ENCODE measurements at regions of chr9 and their contacts with region 1.

Region 1: DNA sequence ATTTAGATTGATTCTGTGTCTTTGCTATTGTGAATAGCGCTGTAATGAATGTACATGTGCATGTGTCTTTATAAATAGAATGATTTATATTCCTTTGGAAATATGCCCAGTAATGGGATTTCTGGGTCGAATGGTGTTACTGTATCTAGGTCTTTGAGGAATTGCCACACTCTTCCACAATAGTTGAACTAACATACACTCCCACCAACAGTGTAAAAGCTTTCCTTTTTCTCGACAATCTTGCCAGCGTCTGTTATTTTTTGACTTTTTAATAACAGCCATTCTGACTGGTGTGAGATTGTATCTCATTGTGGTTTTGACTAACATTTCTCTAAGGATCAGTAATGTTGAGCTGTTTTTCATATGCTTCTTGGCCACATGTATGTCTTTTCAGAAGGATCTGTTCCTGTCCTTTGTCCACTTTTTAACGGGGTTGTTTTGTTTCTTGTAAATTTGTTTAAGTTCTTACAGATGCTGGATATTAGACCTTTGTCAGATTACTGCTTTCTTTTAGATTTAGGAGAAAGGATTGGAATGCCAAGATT is 125.0 kb upstream of the NR5A1 start:
- DNase-seq: peak; percentile 38
- ATAC-seq: no peak
- H3K4me3 ChIP-seq: no peak overlapping the region
- H3K27ac ChIP-seq: no peak overlapping the region
- H3K4me1 ChIP-seq: peaks cover 2% of the 10 kb centered on the region; the same call in 1 of the 2 replicates
- H3K27me3 ChIP-seq: no peaks in the 10 kb centered on the region; the same call in 1 of the 2 replicates
- CTCF ChIP-seq: no peak
- POLR2A ChIP-seq: no peak
- RAD21 ChIP-seq: no peak

Region 2: GRCh38 chr9:124645274-124645673 is 13.1 kb after region 1 on chr9:
- CTCF ChIA-PET with region 1: interaction called, 4 read pairs
- POLR2A ChIA-PET with region 1: no interaction called
- dilution Hi-C with region 1: no loop called
- in situ Hi-C with region 1: no loop called
- intact Hi-C with region 1: loop called (anchors 1 kb)
- DNase-seq: no peak
- ATAC-seq: no peak
- H3K4me3 ChIP-seq: no peak overlapping the region
- H3K27ac ChIP-seq: no peak overlapping the region
- H3K4me1 ChIP-seq: no peaks in the 10 kb centered on the region
- H3K27me3 ChIP-seq: peaks cover 4% of the 10 kb centered on the region
- CTCF ChIP-seq: no peak
- POLR2A ChIP-seq: no peak
- RAD21 ChIP-seq: no peak

Region 3: DNA sequence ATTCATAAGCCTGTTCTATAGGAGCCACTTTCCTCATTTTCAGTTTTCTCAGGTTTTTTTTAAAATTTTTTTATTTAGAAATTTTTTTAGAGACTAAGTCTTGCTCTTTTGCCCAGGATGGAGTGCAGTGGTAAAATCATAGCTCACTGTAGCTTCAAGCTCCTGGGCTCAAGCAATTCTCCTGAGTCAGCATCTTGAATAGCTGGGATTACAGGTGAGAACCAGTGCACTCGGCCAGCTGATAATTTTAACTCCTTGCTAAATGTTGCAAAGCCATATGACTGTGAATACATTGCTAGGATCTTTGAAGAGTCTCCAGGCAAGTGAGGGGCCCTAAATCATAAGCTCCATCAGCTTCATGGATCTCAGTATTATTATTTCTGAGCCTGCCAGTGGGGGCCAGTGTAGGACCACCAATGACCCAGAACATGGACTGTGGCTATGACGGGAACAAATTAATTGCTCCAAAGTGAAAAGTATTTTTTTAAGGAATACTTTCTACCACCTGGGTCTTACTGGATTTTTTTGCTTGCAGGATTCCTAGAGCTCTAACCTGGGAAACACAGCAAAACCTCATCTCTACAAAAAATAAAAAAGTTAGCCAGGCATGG is 623.7 kb after region 1 on chr9:
- CTCF ChIA-PET with region 1: no interaction called
- POLR2A ChIA-PET with region 1: no interaction called
- dilution Hi-C with region 1: no loop called
- in situ Hi-C with region 1: no loop called
- intact Hi-C with region 1: no loop called
- DNase-seq: no peak
- ATAC-seq: peak; percentile 59; the same call in 1 of the 2 replicates
- H3K4me3 ChIP-seq: no peak overlapping the region
- H3K27ac ChIP-seq: no peak overlapping the region
- H3K4me1 ChIP-seq: no peaks in the 10 kb centered on the region
- H3K27me3 ChIP-seq: no peaks in the 10 kb centered on the region
- CTCF ChIP-seq: peak; percentile 48
- POLR2A ChIP-seq: no peak
- RAD21 ChIP-seq: peak; percentile 60

Measured in IMR-90 (cell line).